IMR-90 (cell line): ENCODE measurements at regions of chr7 and their contacts with region 1.

Region 1: GRCh38 chr7:1537535-1538412 is 7.3 kb downstream of the MAFK start:
- DNase-seq: peak; percentile 97
- ATAC-seq: peak; percentile 36
- H3K4me3 ChIP-seq: peak overlapping the region; percentile 41
- H3K27ac ChIP-seq: peak overlapping the region; percentile 96
- H3K4me1 ChIP-seq: peaks cover 34% of the 10 kb centered on the region
- H3K27me3 ChIP-seq: no peaks in the 10 kb centered on the region
- CTCF ChIP-seq: no peak
- POLR2A ChIP-seq: peak; percentile 97
- RAD21 ChIP-seq: peak; percentile 11; the same call in 1 of the 2 replicates

Region 2: DNA sequence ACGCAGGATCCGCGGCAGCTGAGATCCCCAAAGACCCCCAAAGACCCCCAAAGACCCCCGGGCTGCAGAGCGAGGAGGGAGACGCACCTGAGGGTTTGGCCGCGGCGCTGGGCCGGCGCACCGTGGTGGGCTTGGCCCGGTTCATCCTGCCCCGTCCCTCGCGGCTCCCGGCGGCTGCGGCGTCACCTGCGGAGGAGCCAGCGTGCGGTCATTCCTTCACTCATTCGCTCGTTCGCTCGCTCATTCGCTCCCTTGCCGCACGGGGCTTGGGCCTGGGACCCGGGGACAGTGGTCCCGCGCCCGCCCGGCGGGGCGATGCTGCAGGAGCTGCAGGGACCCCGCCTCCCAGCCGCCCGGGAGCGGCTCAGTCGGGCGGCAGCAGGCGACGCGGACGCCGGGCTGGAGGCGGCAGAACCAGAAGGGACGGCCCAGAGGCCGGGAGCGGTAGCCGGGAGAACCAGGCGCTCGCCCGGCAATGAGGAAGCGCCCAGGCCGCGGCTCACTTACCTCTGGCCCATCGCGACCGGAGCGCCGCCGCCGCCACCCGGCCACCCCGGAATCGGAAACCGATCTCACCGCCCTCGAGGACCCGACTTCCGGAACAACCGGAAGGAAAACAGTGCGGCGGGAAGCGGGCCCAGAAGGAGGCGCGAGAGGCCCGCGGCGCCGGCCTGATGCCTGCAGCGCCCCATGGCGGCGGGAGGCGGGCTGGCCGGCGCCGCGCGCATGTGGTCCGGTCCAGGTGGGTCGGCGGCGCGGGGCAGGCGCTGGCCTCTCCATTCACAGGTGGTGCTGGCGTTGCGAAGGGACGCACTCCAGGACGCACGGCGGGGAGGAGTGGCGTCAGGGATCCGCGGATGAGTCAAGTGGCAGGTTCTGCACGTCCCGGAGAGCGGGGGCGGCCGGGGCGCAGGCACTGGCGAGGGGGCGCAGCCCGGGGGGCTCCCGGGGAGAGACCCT is 33.7 kb before region 1 on chr7 and contains the start of gene INTS1:
- CTCF ChIA-PET with region 1: interaction called, 3 read pairs
- POLR2A ChIA-PET with region 1: no interaction called
- dilution Hi-C with region 1: no loop called
- in situ Hi-C with region 1: no loop called
- intact Hi-C with region 1: loop called (anchors 5 kb)
- DNase-seq: peak; percentile 85
- ATAC-seq: peak; percentile 97
- H3K4me3 ChIP-seq: peak within 1 kb of the TSS; percentile 98
- H3K27ac ChIP-seq: peak within 1 kb of the TSS; percentile 84
- H3K4me1 ChIP-seq: peaks cover 5% of the 10 kb centered on the region
- H3K27me3 ChIP-seq: no peaks in the 10 kb centered on the region
- CTCF ChIP-seq: peak; percentile 99
- POLR2A ChIP-seq: peak; percentile 81
- RAD21 ChIP-seq: peak; percentile 56
- total RNA-seq, gene INTS1: 9.3 and 10.0 TPM in 2 replicates

Region 3: DNA sequence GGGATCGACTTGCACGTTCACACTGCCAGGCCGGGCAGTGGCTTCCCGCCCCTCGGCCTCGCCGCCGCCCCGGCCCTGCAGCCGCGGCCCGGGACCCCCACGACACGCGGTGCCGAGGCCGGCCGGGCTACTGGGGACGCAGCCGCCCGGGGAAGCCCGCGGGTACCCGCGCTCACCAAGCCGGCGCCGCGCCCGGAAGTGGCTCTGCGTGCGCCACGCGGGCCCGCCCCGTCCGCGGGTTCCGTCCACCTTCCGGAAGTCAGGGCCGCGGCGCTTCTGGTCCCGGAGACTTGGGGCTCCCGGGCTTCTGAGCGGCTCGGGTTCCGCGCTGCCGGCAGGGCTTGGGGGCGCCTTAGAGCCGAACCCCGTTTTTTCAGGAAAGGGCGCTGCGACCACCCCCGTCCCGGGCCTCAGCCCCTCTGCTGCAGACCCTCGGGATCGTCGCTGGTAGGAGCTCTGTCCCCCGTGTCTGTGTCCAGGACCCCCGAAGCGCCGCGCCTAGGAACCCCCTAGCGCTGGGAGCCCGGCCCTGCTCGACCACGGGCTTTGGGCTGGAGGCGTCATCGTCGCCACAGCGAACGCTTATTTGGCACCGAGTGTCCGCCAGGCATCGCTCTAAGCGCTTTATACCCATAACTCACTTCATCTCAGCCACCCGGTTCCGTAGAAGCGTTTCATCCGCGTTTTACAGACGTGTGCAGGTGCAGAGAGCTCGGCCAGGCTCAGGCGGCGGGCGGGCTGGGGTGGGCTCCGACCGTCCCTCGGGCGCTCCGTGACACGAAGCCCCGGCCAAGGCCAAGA is 32.3 kb after region 1 on chr7 and contains the start of gene PSMG3:
- CTCF ChIA-PET with region 1: no interaction called
- POLR2A ChIA-PET with region 1: no interaction called
- dilution Hi-C with region 1: no loop called
- in situ Hi-C with region 1: no loop called
- intact Hi-C with region 1: loop called (anchors 2 kb)
- DNase-seq: peak; percentile 89
- ATAC-seq: peak; percentile 87
- H3K4me3 ChIP-seq: peak within 1 kb of the TSS; percentile 92
- H3K27ac ChIP-seq: peak within 1 kb of the TSS; percentile 96
- H3K4me1 ChIP-seq: peaks cover 14% of the 10 kb centered on the region
- H3K27me3 ChIP-seq: no peaks in the 10 kb centered on the region
- CTCF ChIP-seq: peak; percentile 17; the same call in 1 of the 2 replicates
- POLR2A ChIP-seq: peak; percentile 75
- RAD21 ChIP-seq: no peak
- total RNA-seq, gene PSMG3: 30.6 and 37.3 TPM in 2 replicates